BJ (cell line): ENCODE measurements at regions of chr17 and their contacts with region 1.

Region 1: GRCh38 chr17:51764387-51764972 is 394.0 kb downstream of the CA10 start:
- DNase-seq: peak; percentile 1
- H3K4me3 ChIP-seq: no peak overlapping the region
- H3K27me3 ChIP-seq: no peaks in the 10 kb centered on the region
- CTCF ChIP-seq: peak; percentile 88

Region 2: GRCh38 chr17:51748749-51749539 is 15.5 kb before region 1 on chr17:
- CTCF ChIA-PET with region 1: interaction called, 19 read pairs
- POLR2A ChIA-PET with region 1: no interaction called
- DNase-seq: no peak
- H3K4me3 ChIP-seq: no peak overlapping the region
- H3K27me3 ChIP-seq: no peaks in the 10 kb centered on the region
- CTCF ChIP-seq: no peak

Region 3: DNA sequence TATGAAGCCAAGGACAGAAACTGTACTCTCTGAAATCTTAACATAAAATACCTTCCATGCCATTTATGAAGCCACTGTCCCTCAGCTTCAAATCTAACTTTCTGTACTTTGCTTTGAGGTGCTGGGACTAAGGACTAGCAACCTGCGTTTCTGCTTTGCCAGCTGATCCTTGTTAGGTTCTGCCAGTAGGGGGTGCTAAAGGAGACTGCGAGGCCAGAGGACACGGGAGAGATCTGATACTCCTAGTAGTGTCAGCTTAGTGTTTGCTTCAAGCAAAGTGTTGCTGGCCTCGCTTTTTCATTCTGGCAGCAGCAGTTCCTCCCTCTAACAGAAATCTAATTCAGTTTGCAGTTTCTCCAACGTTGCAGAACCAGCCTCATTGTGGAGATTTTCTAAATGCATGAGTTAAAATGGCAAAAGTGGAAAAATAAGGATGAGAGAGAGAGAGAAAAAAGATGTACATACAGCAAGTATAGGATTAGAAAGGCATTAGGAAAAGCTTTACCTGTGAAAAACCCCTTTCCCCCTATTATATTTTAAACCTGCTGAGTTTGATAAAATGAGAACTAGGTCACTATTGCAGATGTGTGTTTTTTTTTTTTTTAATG is 96.6 kb after region 1 on chr17:
- CTCF ChIA-PET with region 1: no interaction called
- POLR2A ChIA-PET with region 1: no interaction called
- DNase-seq: no peak
- H3K4me3 ChIP-seq: no peak overlapping the region
- H3K27me3 ChIP-seq: no peaks in the 10 kb centered on the region
- CTCF ChIP-seq: peak; percentile 49

Region 4: GRCh38 chr17:52106638-52107261 is 342.3 kb after region 1 on chr17:
- CTCF ChIA-PET with region 1: interaction called, 25 read pairs
- POLR2A ChIA-PET with region 1: no interaction called
- DNase-seq: no peak
- H3K4me3 ChIP-seq: no peak overlapping the region
- H3K27me3 ChIP-seq: no peaks in the 10 kb centered on the region
- CTCF ChIP-seq: peak; percentile 58